ENCODE measurements at regions of chr7 and their contacts with region 1.

Region 1: DNA sequence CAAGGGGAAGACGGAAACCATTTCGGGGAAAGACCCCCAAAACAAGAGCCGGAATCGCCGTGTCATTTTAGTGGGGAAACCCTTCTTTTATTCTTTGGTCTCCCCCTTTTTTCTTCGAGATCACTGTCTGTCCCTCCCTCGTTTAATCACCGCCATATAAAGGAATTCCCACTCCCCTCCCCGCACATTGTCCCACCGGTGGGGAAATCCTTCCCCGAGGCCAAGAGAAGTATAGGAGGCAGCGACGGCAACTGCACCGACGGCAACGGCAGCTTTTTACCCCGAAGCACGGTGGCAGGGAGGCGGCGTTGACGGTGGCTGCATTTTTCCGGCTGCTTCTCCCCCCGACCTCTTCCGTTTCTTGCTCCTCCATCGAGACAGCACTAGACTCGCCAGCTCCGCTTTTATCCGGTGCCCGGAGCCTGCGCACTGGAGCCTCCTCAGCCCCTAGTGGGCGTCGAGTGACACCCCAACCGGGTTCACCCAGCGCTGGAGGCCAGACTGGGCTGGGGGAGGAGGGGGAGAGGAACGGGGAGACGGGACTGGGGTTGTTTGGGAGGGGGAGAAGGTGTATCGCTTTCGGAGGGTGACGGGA is 687 bp upstream of the KMT2E start:
- DNase-seq: peak; percentile 94
- H3K4me3 Mint-ChIP-seq: peak overlapping the region; percentile 95
- H3K27ac Mint-ChIP-seq: peak overlapping the region; percentile 99
- H3K4me1 Mint-ChIP-seq: peaks cover 25% of the 10 kb centered on the region
- H3K27me3 Mint-ChIP-seq: no peaks in the 10 kb centered on the region

Region 2: DNA sequence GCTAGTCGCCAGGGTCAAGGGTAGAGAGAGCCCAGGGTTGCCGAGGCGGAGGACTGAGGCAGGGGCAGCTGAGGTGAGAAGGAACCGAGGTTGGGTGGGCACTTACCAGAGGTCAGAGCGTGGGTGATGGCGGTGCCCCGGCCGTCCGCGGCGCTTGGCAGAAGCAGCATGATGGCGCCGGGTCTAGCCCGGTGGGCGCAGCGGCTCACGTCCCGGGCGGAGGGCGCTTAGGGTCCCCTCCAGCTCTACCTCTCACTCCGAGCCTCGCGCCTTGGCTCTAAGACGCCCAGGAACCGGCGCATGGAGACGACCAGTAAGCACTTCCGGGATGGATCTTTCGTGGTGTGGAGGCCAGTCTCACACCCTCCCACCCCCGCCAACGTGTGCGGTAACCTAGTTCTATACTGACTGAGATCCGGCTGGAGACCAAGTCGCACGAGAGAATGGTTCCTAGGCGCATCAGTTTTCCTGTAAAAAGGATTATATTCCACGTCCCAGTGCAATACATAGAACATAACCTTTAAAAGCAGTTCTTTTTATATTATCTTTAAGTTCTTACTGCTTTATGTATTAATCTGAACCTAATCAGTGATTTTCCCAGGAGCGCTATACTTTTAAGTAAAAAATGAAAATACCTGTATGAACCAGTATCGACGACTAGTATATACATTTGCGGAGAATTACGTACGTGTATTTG is 1668.7 kb before region 1 on chr7 and contains the start of gene DNAJC2:
- CTCF ChIA-PET with region 1: no interaction called
- intact Hi-C with region 1: loop called (anchors 2 kb)
- DNase-seq: peak; percentile 90
- H3K4me3 Mint-ChIP-seq: peak within 1 kb of the TSS; percentile 99
- H3K27ac Mint-ChIP-seq: peak within 1 kb of the TSS; percentile 98
- H3K4me1 Mint-ChIP-seq: peaks cover 57% of the 10 kb centered on the region
- H3K27me3 Mint-ChIP-seq: no peaks in the 10 kb centered on the region
- total RNA-seq, gene DNAJC2: 39.8 to 42.1 TPM

Region 3: DNA sequence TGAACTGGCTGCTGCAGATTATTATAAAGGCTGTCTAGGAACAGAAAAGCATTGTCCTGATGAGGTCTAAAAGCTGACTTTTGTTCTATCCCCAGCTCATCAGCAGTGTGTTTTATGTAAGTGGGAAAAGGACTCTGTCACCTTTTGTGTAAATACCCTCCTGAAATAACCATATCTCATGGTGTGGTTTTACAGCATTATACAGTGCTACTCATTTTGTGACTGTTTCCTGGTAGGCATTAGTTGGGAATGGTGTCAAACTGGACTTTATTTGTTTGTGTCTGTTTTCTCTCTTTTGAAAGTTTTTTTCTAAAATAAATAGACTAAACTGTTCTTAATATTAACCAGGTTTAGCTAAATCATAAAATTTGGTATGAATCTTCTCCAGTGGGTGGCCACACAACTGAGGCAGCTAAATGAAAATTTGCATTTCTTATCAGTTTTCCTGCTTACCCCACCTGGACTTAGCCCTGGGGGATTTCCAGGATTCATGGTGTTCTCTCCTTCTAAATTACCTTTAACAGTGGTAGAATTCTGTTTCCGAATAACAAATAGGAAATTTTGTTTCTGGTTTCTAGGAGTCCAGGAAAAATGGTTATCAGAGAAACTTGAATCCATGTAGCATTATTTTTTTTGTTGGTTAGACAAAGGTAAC is 544.0 kb before region 1 on chr7:
- CTCF ChIA-PET with region 1: no interaction called
- intact Hi-C with region 1: no loop called
- DNase-seq: no peak
- H3K4me3 Mint-ChIP-seq: no peak overlapping the region
- H3K27ac Mint-ChIP-seq: no peak overlapping the region
- H3K4me1 Mint-ChIP-seq: no peaks in the 10 kb centered on the region
- H3K27me3 Mint-ChIP-seq: no peaks in the 10 kb centered on the region

Region 4: GRCh38 chr7:105209870-105210269 is 196.6 kb after region 1 on chr7:
- CTCF ChIA-PET with region 1: interaction called, 4 read pairs
- intact Hi-C with region 1: loop called (anchors 1 kb)
- DNase-seq: peak; percentile 28
- H3K4me3 Mint-ChIP-seq: no peak overlapping the region
- H3K27ac Mint-ChIP-seq: no peak overlapping the region
- H3K4me1 Mint-ChIP-seq: peaks cover 65% of the 10 kb centered on the region
- H3K27me3 Mint-ChIP-seq: no peaks in the 10 kb centered on the region

Region 5: GRCh38 chr7:105298439-105298907 is 285.2 kb after region 1 on chr7:
- CTCF ChIA-PET with region 1: no interaction called
- intact Hi-C with region 1: loop called (anchors 1 kb)
- DNase-seq: peak; percentile 55
- H3K4me3 Mint-ChIP-seq: peak overlapping the region; percentile 33
- H3K27ac Mint-ChIP-seq: peak overlapping the region; percentile 44
- H3K4me1 Mint-ChIP-seq: peaks cover 51% of the 10 kb centered on the region
- H3K27me3 Mint-ChIP-seq: no peaks in the 10 kb centered on the region

Region 6: GRCh38 chr7:105387621-105388372 is 374.5 kb after region 1 on chr7:
- CTCF ChIA-PET with region 1: interaction called, 3 read pairs
- intact Hi-C with region 1: loop called (anchors 5 kb)
- DNase-seq: peak; percentile 58
- H3K4me3 Mint-ChIP-seq: peak overlapping the region; percentile 85
- H3K27ac Mint-ChIP-seq: peak overlapping the region; percentile 65
- H3K4me1 Mint-ChIP-seq: peaks cover 32% of the 10 kb centered on the region
- H3K27me3 Mint-ChIP-seq: no peaks in the 10 kb centered on the region

Region 7: GRCh38 chr7:105531792-105532671 is 518.7 kb after region 1 on chr7 and contains the start of gene RINT1:
- CTCF ChIA-PET with region 1: no interaction called
- intact Hi-C with region 1: loop called (anchors 2 kb)
- DNase-seq: peak; percentile 95
- H3K4me3 Mint-ChIP-seq: peak within 1 kb of the TSS; percentile 83
- H3K27ac Mint-ChIP-seq: peak within 1 kb of the TSS; percentile 85
- H3K4me1 Mint-ChIP-seq: peaks cover 23% of the 10 kb centered on the region
- H3K27me3 Mint-ChIP-seq: no peaks in the 10 kb centered on the region
- total RNA-seq, gene RINT1: 22.1 to 25.2 TPM

Region 8: DNA sequence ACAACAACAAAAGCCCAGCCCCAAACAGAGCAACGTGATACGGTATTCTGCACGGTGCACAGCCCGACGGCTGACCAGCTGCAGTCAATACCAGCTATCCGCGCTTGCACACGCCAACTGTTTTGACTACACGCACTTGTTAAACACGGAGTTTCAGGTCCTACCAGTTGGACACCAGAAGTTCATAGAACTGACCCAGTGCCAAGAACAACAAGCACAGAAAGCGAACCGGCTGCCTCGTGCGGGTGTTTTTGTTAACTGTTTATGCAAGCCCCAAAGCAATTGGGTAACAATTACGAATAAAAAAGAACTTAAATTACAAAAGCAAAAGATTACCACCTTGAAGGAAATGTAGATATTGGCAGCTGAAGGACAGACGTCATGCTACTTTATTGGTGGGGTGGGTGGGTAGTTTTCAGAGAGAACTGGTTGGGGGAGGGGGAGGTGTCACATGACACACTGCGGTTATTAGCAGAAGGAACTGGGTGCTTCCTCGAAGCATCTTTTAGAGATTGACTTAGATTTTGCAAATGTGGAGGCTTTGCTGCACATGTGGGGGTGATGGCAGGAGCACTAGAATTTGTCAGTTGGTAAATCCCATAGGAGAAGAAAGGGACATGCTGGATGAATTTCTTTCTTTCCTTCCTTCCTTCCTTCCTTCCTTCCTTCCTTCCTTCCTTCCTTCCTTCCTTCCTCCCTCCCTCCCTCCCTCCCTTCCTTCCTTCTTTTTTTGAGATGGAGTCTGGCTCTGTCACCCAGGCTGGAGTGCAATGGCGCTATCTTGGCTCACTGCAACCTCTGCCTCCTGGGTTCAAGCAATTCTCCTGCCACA is 678.6 kb after region 1 on chr7:
- CTCF ChIA-PET with region 1: no interaction called
- intact Hi-C with region 1: loop called (anchors 5 kb)
- DNase-seq: peak; percentile 80
- H3K4me3 Mint-ChIP-seq: peak overlapping the region; percentile 77
- H3K27ac Mint-ChIP-seq: peak overlapping the region; percentile 79
- H3K4me1 Mint-ChIP-seq: peaks cover 36% of the 10 kb centered on the region
- H3K27me3 Mint-ChIP-seq: no peaks in the 10 kb centered on the region

Measured in activated naive CD4-positive, alpha-beta T cell treated with anti-CD3 and anti-CD28 coated beads for 36 hours (primary cell).